Activated CD4-positive, alpha-beta T cell treated with anti-CD3 and anti-CD28 coated beads for 36 hours (primary cell): ENCODE measurements at regions of chr5 and their contacts with region 1.

Region 1: GRCh38 chr5:55062039-55062779 is 38.2 kb downstream of the GZMK start:
- DNase-seq: peak; percentile 81
- ATAC-seq: peak; percentile 83
- H3K4me3 Mint-ChIP-seq: peak overlapping the region; percentile 52
- H3K27ac Mint-ChIP-seq: peak overlapping the region; percentile 80
- H3K4me1 Mint-ChIP-seq: peaks cover 48% of the 10 kb centered on the region
- H3K27me3 Mint-ChIP-seq: peaks cover 4% of the 10 kb centered on the region

Region 2: GRCh38 chr5:54743997-54744788 is 318.0 kb before region 1 on chr5:
- CTCF ChIA-PET with region 1: no interaction called
- POLR2A ChIA-PET with region 1: no interaction called
- intact Hi-C with region 1: no loop called
- DNase-seq: peak; percentile 61
- ATAC-seq: peak; percentile 94
- H3K4me3 Mint-ChIP-seq: no peak overlapping the region
- H3K27ac Mint-ChIP-seq: peak overlapping the region; percentile 62
- H3K4me1 Mint-ChIP-seq: peaks cover 15% of the 10 kb centered on the region
- H3K27me3 Mint-ChIP-seq: peaks cover 3% of the 10 kb centered on the region

Region 3: DNA sequence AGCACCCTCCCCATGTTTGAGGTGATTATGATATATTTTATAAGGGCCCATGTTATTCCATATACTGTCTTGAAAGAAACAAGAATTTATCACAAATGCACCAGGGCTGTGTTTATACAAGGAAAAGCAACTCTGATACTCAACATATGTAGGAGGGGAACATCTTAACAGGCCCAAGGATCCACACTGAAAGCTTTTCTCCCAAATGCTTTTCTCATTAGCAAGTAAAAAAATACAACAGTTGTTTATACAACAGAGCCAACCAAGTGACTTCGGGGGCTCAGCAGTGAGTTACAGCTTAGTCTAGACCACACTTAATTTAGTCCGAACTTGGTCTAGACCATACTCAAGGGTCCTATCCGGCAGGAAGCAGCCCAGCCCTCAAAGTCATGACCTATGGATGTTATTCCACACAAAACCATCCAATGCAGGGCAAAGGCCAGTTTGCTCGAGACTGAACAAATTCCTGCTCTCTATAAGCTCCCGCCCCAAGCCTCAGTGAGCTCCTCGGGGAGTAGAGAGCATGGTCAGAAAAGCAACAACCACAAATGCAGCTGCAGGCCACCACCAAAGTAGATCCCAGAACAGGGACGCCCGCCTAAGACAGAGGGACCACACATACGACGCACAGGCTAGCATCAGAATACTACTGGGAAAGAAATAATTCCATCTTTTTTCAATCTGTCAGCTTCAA is 31.4 kb before region 1 on chr5:
- CTCF ChIA-PET with region 1: no interaction called
- POLR2A ChIA-PET with region 1: no interaction called
- intact Hi-C with region 1: no loop called
- DNase-seq: no peak
- ATAC-seq: no peak
- H3K4me3 Mint-ChIP-seq: no peak overlapping the region
- H3K27ac Mint-ChIP-seq: no peak overlapping the region
- H3K4me1 Mint-ChIP-seq: peaks cover 33% of the 10 kb centered on the region
- H3K27me3 Mint-ChIP-seq: no peaks in the 10 kb centered on the region

Region 4: GRCh38 chr5:55102348-55102747 is 40.1 kb after region 1 on chr5 and contains the start of gene GZMA:
- CTCF ChIA-PET with region 1: no interaction called
- POLR2A ChIA-PET with region 1: no interaction called
- intact Hi-C with region 1: loop called in 1 of 2 experiments (anchors 2 kb)
- DNase-seq: peak; percentile 39
- ATAC-seq: peak; percentile 84
- H3K4me3 Mint-ChIP-seq: peak within 1 kb of the TSS; percentile 50
- H3K27ac Mint-ChIP-seq: peak within 1 kb of the TSS; percentile 74
- H3K4me1 Mint-ChIP-seq: peaks cover 65% of the 10 kb centered on the region
- H3K27me3 Mint-ChIP-seq: peaks cover 19% of the 10 kb centered on the region
- total RNA-seq, gene GZMA: 2.4 TPM